ENCODE measurements at regions of chr17 and their contacts with region 1.

Region 1: DNA sequence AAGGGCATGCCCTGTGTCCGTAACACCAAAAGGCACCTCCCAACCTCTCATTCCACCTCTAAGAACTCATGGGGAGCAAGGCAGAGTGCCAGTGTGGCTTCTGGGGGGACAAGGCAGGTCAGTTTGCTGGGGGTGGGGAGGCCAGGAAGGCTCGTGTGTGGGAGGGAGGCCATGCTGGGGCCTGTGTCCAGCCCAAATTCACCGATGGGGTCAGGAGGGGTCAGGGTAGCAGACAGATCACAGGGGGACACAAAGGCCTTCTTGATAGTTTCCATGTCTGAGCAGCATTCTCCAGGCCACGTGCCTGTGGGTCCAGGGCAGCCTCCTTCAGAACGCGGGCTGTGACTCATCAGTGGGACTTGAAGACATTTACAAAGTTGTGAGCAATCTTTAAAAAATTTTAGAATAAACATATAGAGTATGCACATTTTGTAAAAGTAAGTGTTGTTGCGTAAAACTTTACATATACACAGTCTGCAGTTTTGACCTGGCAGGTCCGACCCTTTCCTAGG is 20.9 kb downstream of the SPACA3 start:
- DNase-seq: no peak
- ATAC-seq: no peak
- H3K4me3 Mint-ChIP-seq: no peak overlapping the region
- H3K27ac Mint-ChIP-seq: no peak overlapping the region
- H3K4me1 Mint-ChIP-seq: no peaks in the 10 kb centered on the region
- H3K27me3 Mint-ChIP-seq: no peaks in the 10 kb centered on the region
- CTCF ChIP-seq: no peak

Region 2: DNA sequence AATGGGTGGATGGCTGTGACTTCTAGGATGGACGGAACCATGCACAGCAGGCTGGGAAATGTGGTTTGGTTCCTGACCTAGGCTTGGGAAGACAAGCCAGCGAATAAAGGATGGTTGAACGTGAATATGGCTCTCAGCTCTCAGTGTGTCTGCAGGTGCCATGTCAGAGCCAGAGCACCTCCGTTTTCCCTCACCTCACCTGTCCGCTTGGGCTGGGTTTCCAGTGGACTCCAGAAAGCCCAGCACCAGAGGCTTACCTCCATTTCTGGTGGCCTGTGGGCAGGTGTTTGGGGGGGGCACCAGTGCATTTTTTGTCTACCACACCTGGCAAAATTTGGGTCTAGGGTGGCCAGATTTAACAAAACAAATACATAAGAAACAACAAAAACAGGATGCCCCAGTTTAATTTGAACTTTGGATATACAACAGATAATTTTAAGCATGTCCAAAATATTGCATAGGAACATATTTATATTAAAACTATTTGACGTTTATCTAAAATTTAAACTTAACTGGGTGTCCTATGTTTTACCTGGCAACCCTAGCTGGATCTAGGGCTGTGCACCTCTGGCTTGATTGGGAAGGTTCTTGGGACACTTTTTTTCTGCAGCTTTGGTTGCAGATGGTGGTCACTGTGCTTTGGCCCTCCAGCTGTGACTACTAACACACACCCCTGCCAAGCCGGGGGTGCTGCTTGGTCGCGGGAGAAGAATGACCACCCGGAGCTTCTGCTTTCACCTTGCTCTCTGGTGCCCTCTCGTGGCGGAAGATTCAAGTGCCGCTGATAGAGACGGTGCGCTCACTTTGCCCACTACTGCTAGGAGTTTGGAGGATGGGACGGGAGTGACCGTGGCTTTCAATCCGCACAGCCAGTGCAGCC is 14.6 kb before region 1 on chr17:
- CTCF ChIA-PET with region 1: interaction called, 29 read pairs
- POLR2A ChIA-PET with region 1: interaction called, 3 read pairs
- intact Hi-C with region 1: no loop called
- DNase-seq: peak; percentile 86
- ATAC-seq: peak; percentile 68
- H3K4me3 Mint-ChIP-seq: no peak overlapping the region
- H3K27ac Mint-ChIP-seq: no peak overlapping the region
- H3K4me1 Mint-ChIP-seq: peaks cover 2% of the 10 kb centered on the region
- H3K27me3 Mint-ChIP-seq: peaks cover 24% of the 10 kb centered on the region
- CTCF ChIP-seq: peak; percentile 79

Measured in activated CD8-positive, alpha-beta T cell treated with anti-CD3 and anti-CD28 coated beads for 36 hours (primary cell).